Caco-2 (cell line): ENCODE measurements at regions of chr10 and their contacts with region 1.

Region 1: GRCh38 chr10:70146489-70147258 is at the start of gene TYSND1:
- DNase-seq: peak; percentile 100
- H3K4me3 ChIP-seq: peak within 1 kb of the TSS; percentile 74
- H3K4me3 Mint-ChIP-seq: peak within 1 kb of the TSS; percentile 98
- H3K27ac Mint-ChIP-seq: peak within 1 kb of the TSS; percentile 68
- H3K4me1 ChIP-seq: peaks cover 15% of the 10 kb centered on the region; the same call in 1 of the 2 replicates
- H3K4me1 Mint-ChIP-seq: peaks cover 8% of the 10 kb centered on the region
- H3K27me3 ChIP-seq: no peaks in the 10 kb centered on the region
- H3K27me3 Mint-ChIP-seq: no peaks in the 10 kb centered on the region
- CTCF ChIP-seq: peak; percentile 67 to 98
- total RNA-seq, gene TYSND1: 29.4 and 29.8 TPM in 2 replicates

Region 2: DNA sequence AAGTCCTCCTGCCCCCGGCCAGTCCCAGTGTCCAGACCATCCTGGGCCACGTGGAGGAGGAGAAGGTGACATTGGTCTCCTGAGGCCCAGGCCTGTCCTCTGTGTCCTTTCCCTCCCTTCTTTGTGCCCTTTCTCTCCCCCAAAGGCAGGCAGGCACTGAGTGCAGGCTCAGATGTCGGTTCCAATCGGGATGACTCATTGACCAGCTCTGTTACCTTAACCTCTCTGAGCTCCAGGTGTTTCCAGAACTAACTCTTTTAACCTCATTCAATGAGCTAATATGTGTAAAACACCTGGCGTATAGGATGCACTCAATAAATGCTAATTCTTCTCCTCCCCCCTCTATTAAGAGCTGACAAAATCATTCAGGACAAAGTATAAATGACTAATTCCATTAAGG is 68.3 kb before region 1 on chr10:
- CTCF ChIA-PET with region 1: interaction called, 124 read pairs
- POLR2A ChIA-PET with region 1: interaction called, 11 read pairs
- intact Hi-C with region 1: no loop called
- DNase-seq: no peak
- H3K4me3 ChIP-seq: no peak overlapping the region
- H3K4me3 Mint-ChIP-seq: no peak overlapping the region
- H3K27ac Mint-ChIP-seq: no peak overlapping the region
- H3K4me1 ChIP-seq: no peaks in the 10 kb centered on the region
- H3K4me1 Mint-ChIP-seq: no peaks in the 10 kb centered on the region
- H3K27me3 ChIP-seq: no peaks in the 10 kb centered on the region; the same call in 1 of the 2 replicates
- H3K27me3 Mint-ChIP-seq: peaks cover 24% of the 10 kb centered on the region
- CTCF ChIP-seq: no peak

Region 3: DNA sequence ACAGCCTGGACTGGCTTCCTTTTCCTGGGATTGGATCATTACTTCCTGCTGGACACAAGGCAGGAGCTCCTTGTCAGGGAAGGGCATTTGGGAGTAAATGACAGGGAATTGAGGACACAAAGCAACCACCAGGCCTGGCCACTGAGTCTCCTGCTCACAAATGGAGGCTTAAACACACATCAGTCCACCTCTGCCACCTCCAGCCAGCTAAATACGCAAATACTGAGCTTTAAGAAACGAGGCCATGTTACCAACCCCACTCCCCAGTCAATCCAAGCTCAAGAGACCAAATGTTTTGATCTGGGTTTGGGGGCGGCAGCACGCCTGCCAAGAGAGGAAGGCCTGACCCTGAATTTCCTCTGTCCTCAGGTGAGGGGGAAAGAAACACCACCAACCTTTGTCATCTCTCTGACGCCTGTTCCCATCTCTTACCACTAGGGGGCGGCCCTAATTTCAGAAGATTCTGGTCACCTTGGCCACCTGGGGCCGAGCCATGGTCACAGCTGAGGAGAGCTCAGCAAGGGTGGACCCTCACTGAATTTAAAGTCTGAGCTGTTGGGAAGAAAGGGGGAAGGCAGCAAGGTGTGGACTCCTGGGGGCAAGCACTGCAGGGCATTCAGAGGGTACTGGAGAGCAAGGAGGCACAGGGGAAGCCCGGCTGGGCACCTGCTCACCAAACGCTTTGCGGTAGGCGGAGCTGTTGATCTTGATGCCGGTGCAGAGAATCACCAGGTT is 30.6 kb before region 1 on chr10:
- CTCF ChIA-PET with region 1: interaction called, 105 read pairs
- POLR2A ChIA-PET with region 1: interaction called, 16 read pairs
- intact Hi-C with region 1: loop called (anchors 1 kb)
- DNase-seq: peak; percentile 76 to 87
- H3K4me3 ChIP-seq: no peak overlapping the region
- H3K4me3 Mint-ChIP-seq: no peak overlapping the region
- H3K27ac Mint-ChIP-seq: peak overlapping the region; percentile 7
- H3K4me1 ChIP-seq: no peaks in the 10 kb centered on the region
- H3K4me1 Mint-ChIP-seq: no peaks in the 10 kb centered on the region
- H3K27me3 ChIP-seq: no peaks in the 10 kb centered on the region
- H3K27me3 Mint-ChIP-seq: no peaks in the 10 kb centered on the region
- CTCF ChIP-seq: peak; percentile 97 to 99

Region 4: DNA sequence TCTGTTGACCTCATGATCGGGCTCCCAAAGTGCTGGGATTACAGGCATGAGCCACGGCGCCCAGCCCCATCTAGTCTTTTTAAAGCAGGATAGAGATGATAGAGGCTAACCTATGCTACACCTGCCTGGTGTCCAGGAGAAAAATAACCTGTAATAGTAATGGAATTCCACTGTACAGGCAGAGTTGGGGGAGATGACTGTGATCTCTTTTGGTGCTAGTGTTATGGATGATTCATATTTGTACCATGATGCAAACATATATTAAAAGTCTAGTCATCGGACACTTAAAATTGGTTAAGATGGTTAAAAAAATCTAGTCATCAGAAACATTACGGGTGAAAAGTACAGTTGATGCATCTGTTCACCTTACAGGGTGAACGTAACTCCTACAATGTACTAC is 29.8 kb after region 1 on chr10:
- CTCF ChIA-PET with region 1: interaction called, 69 read pairs
- POLR2A ChIA-PET with region 1: interaction called, 128 read pairs
- intact Hi-C with region 1: no loop called
- DNase-seq: no peak
- H3K4me3 ChIP-seq: no peak overlapping the region
- H3K4me3 Mint-ChIP-seq: no peak overlapping the region
- H3K27ac Mint-ChIP-seq: no peak overlapping the region
- H3K4me1 ChIP-seq: no peaks in the 10 kb centered on the region; the same call in 1 of the 2 replicates
- H3K4me1 Mint-ChIP-seq: no peaks in the 10 kb centered on the region
- H3K27me3 ChIP-seq: no peaks in the 10 kb centered on the region
- H3K27me3 Mint-ChIP-seq: no peaks in the 10 kb centered on the region
- CTCF ChIP-seq: no peak

Region 5: GRCh38 chr10:70267161-70267933 is 120.7 kb after region 1 on chr10:
- CTCF ChIA-PET with region 1: interaction called, 28 read pairs
- POLR2A ChIA-PET with region 1: interaction called, 3 read pairs
- intact Hi-C with region 1: no loop called
- DNase-seq: peak; percentile 41 to 45
- H3K4me3 ChIP-seq: no peak overlapping the region
- H3K4me3 Mint-ChIP-seq: no peak overlapping the region
- H3K27ac Mint-ChIP-seq: no peak overlapping the region
- H3K4me1 ChIP-seq: no peaks in the 10 kb centered on the region; the same call in 1 of the 2 replicates
- H3K4me1 Mint-ChIP-seq: peaks cover 6% of the 10 kb centered on the region
- H3K27me3 ChIP-seq: no peaks in the 10 kb centered on the region; the same call in 1 of the 2 replicates
- H3K27me3 Mint-ChIP-seq: no peaks in the 10 kb centered on the region
- CTCF ChIP-seq: no peak

Region 6: DNA sequence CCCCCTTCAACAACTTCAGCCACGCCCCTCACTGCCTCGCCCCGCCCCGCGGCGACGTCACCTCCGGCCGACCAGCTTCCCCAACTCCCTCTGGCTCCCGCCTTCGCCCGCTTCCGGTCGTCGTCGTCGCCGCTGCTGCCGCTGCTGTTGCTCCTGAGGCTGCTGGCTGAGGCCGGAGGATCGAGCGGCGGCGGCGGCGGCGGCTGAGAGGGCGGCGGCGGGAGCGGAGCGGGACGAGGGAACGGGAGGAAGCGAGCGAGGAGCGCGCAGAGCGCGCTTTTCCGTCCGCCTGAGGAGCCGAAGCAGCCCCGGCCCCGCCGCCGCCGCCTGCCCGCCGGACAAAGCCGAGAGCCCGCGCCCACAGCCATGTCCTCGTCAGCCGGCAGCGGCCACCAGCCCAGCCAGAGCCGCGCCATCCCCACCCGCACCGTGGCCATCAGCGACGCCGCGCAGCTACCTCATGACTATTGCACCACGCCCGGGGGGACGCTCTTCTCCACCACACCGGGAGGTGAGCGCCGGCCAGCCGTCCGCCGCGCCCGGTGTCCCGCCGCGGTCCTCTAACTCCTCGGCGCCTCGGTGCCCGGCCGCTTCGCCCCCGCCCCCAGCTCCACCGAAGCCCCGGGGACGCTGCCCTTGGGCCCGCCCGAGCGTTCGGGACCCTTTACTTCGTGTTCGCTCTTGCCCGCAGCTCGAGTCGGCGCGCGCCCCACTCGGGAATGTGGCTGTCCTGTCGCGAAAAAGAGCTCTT is 257.5 kb after region 1 on chr10 and contains the start of gene EIF4EBP2:
- CTCF ChIA-PET with region 1: interaction called, 11 read pairs
- POLR2A ChIA-PET with region 1: interaction called, 13 read pairs
- intact Hi-C with region 1: no loop called
- DNase-seq: peak; percentile 99 to 100
- H3K4me3 ChIP-seq: peak within 1 kb of the TSS; percentile 99
- H3K4me3 Mint-ChIP-seq: peak within 1 kb of the TSS; percentile 95
- H3K27ac Mint-ChIP-seq: peak within 1 kb of the TSS; percentile 91
- H3K4me1 ChIP-seq: peaks cover 15% of the 10 kb centered on the region
- H3K4me1 Mint-ChIP-seq: peaks cover 47% of the 10 kb centered on the region
- H3K27me3 ChIP-seq: no peaks in the 10 kb centered on the region
- H3K27me3 Mint-ChIP-seq: no peaks in the 10 kb centered on the region
- CTCF ChIP-seq: no peak
- total RNA-seq, gene EIF4EBP2: 166 and 168 TPM in 2 replicates